CD8-positive, alpha-beta T cell (primary cell): ENCODE measurements at regions of chr1 and their contacts with region 1.

Region 1: GRCh38 chr1:92298573-92299476 is at the starts of genes GLMN and RPAP2:
- DNase-seq: peak; percentile 41 to 88 (median 68)
- ATAC-seq: peak; percentile 96
- H3K4me3 ChIP-seq: peak within 1 kb of the TSS; percentile 76 to 90
- H3K4me3 Mint-ChIP-seq: peak within 1 kb of the TSS; percentile 94
- H3K27ac ChIP-seq: peak within 1 kb of the TSS; percentile 74 to 93
- H3K27ac Mint-ChIP-seq: peak within 1 kb of the TSS; percentile 98
- H3K4me1 ChIP-seq: peaks cover 13% of the 10 kb centered on the region
- H3K4me1 Mint-ChIP-seq: peaks cover 52% of the 10 kb centered on the region
- H3K27me3 ChIP-seq: no peaks in the 10 kb centered on the region
- H3K27me3 Mint-ChIP-seq: no peaks in the 10 kb centered on the region
- CTCF ChIP-seq: no peak
- total RNA-seq, gene GLMN: 9.2 to 9.5 TPM
- total RNA-seq, gene RPAP2: 29.4 to 33.9 TPM

Region 2: DNA sequence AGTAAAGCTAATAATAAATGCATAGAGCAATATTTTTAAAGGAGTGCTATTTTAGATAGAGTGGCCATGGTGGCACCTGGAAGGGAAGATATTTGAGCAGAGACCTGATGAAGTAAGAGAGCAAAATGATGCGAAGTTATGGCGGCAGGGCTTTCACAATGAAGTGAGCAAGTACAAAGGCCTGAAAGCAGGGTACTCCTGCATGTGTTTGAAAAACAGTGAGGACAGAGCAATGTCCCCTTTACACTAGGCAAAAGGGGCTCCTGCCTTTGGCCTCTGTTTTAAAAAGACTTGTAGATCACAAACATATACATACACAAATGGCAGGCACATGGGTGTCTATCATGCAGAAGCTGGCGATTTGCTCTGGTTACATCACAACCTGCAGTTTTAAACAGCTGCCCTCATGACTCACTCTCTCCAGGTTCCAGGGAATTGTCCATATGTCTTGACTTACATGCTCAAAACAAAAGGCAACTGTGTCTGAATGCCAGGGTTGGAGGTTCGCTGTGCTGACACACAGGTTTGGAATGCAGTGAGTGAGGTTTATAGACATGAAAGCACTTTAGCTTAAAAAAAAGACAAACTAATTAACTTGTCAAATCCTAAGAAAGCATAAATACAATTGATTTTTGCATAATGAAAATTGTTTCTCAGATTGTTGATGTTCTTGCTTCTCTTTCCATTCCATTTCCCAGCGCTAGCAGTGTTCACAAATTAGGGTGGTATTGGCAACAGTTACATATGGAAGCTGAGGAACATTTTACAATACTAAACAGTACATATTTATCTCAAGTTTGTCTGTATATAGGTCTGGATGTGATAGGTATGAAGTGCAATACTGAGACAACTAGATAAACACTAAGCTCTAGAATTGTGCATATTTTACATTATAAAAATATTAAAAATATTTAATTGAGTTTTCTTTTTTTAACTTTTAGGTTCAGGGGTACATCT is 1895.7 kb before region 1 on chr1:
- CTCF ChIA-PET with region 1: no interaction called
- POLR2A ChIA-PET with region 1: no interaction called
- intact Hi-C with region 1: no loop called
- DNase-seq: no peak
- ATAC-seq: no peak
- H3K4me3 ChIP-seq: no peak overlapping the region
- H3K4me3 Mint-ChIP-seq: no peak overlapping the region
- H3K27ac ChIP-seq: no peak overlapping the region
- H3K27ac Mint-ChIP-seq: no peak overlapping the region
- H3K4me1 ChIP-seq: no peaks in the 10 kb centered on the region
- H3K4me1 Mint-ChIP-seq: no peaks in the 10 kb centered on the region
- H3K27me3 ChIP-seq: peaks cover 0 to 2% of the 10 kb centered on the region in 2 experiments
- H3K27me3 Mint-ChIP-seq: peaks cover 9% of the 10 kb centered on the region
- CTCF ChIP-seq: no peak

Region 3: GRCh38 chr1:91282695-91283420 is 1016.0 kb before region 1 on chr1:
- CTCF ChIA-PET with region 1: no interaction called
- POLR2A ChIA-PET with region 1: no interaction called
- intact Hi-C with region 1: loop called in 1 of 2 experiments (anchors 10 kb)
- DNase-seq: peak in 8 of 9 experiments; percentile 4 to 68 (median 32)
- ATAC-seq: no peak
- H3K4me3 ChIP-seq: no peak overlapping the region
- H3K4me3 Mint-ChIP-seq: no peak overlapping the region
- H3K27ac ChIP-seq: no peak overlapping the region
- H3K27ac Mint-ChIP-seq: no peak overlapping the region
- H3K4me1 ChIP-seq: no peaks in the 10 kb centered on the region
- H3K4me1 Mint-ChIP-seq: peaks cover 2% of the 10 kb centered on the region
- H3K27me3 ChIP-seq: no peaks in the 10 kb centered on the region
- H3K27me3 Mint-ChIP-seq: peaks cover 10% of the 10 kb centered on the region
- CTCF ChIP-seq: peak; percentile 73

Region 4: GRCh38 chr1:91757763-91758460 is 540.9 kb before region 1 on chr1:
- CTCF ChIA-PET with region 1: no interaction called
- POLR2A ChIA-PET with region 1: no interaction called
- intact Hi-C with region 1: no loop called
- DNase-seq: peak in 2 of 9 experiments; percentile 18 to 46
- ATAC-seq: no peak
- H3K4me3 ChIP-seq: no peak overlapping the region
- H3K4me3 Mint-ChIP-seq: no peak overlapping the region
- H3K27ac ChIP-seq: peak overlapping the region in 1 of 2 experiments; percentile 28
- H3K27ac Mint-ChIP-seq: no peak overlapping the region
- H3K4me1 ChIP-seq: no peaks in the 10 kb centered on the region
- H3K4me1 Mint-ChIP-seq: peaks cover 17% of the 10 kb centered on the region
- H3K27me3 ChIP-seq: no peaks in the 10 kb centered on the region
- H3K27me3 Mint-ChIP-seq: no peaks in the 10 kb centered on the region
- CTCF ChIP-seq: no peak

Region 5: GRCh38 chr1:92080128-92080985 is 218.5 kb before region 1 on chr1 and contains the start of gene BTBD8:
- CTCF ChIA-PET with region 1: no interaction called
- POLR2A ChIA-PET with region 1: interaction called, 3 read pairs
- intact Hi-C with region 1: loop called (anchors 1 to 5 kb)
- DNase-seq: peak; percentile 75 to 91 (median 88)
- ATAC-seq: peak; percentile 97
- H3K4me3 ChIP-seq: peak within 1 kb of the TSS; percentile 82 to 88
- H3K4me3 Mint-ChIP-seq: peak within 1 kb of the TSS; percentile 95
- H3K27ac ChIP-seq: peak within 1 kb of the TSS; percentile 60 to 71
- H3K27ac Mint-ChIP-seq: peak within 1 kb of the TSS; percentile 93
- H3K4me1 ChIP-seq: peaks cover 5% of the 10 kb centered on the region
- H3K4me1 Mint-ChIP-seq: peaks cover 13% of the 10 kb centered on the region
- H3K27me3 ChIP-seq: no peaks in the 10 kb centered on the region
- H3K27me3 Mint-ChIP-seq: no peaks in the 10 kb centered on the region
- CTCF ChIP-seq: no peak
- total RNA-seq, gene BTBD8: 0.72 to 1.2 TPM

Region 6: GRCh38 chr1:92623187-92623778 is 324.5 kb after region 1 on chr1:
- CTCF ChIA-PET with region 1: no interaction called
- POLR2A ChIA-PET with region 1: no interaction called
- intact Hi-C with region 1: loop called in 1 of 2 experiments (anchors 2 kb)
- DNase-seq: peak in 2 of 9 experiments; percentile 39 to 57
- ATAC-seq: no peak
- H3K4me3 ChIP-seq: no peak overlapping the region
- H3K4me3 Mint-ChIP-seq: no peak overlapping the region
- H3K27ac ChIP-seq: no peak overlapping the region
- H3K27ac Mint-ChIP-seq: no peak overlapping the region
- H3K4me1 ChIP-seq: no peaks in the 10 kb centered on the region
- H3K4me1 Mint-ChIP-seq: no peaks in the 10 kb centered on the region
- H3K27me3 ChIP-seq: no peaks in the 10 kb centered on the region
- H3K27me3 Mint-ChIP-seq: no peaks in the 10 kb centered on the region
- CTCF ChIP-seq: peak; percentile 81